Activated CD4-positive, alpha-beta memory T cell treated with anti-CD3 and anti-CD28 coated beads for 36 hours (primary cell): ENCODE measurements at regions of chr13 and their contacts with region 1.

Region 1: GRCh38 chr13:41456768-41457588 is at the start of gene RGCC:
- DNase-seq: peak; percentile 97
- H3K4me3 Mint-ChIP-seq: peak within 1 kb of the TSS; percentile 87
- H3K27ac Mint-ChIP-seq: peak within 1 kb of the TSS; percentile 97
- H3K4me1 Mint-ChIP-seq: peaks cover 41% of the 10 kb centered on the region
- H3K27me3 Mint-ChIP-seq: peaks cover 2% of the 10 kb centered on the region
- total RNA-seq, gene RGCC: 94.8 to 96.8 TPM

Region 2: DNA sequence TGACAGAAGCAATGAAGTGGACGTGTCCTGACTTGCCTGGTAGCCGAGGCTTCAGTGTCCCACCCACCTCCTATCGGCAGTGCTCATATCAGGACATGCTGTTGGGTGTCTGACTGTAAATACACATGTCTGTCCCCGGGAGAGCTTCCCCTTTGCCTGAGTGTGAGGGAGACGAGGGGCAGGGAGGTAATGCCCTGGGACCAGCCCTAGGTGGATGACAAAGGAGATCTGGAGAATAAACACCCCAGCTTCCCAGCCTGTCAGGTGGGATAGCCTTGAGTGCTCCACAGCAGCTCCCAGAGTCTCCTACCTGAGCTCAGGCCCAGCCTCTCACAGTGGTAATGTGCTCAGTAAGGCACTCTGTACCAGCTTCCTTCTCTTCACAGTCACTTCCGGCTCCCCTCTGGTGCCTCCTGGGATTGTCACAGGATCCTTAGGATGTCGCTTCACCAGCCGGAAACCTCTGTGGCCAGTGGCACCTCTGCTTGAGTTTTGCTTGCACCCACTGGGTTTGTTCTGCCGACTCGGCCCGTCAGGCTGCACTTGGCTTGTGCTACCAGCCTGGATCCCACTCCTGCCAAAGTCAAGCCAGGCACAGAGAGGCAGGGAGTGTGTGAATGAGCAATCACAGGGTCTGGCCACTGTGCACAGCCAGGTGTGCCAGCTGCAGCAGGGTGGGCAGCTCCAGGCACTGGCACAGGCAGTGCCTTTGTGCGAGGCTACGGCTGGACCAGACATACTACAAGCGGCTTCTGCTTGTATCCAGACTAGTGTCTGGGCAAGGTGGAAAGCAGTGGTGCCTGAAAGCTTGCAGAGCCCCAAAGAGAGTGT is 54.1 kb before region 1 on chr13:
- CTCF ChIA-PET with region 1: interaction called, 3 read pairs
- POLR2A ChIA-PET with region 1: no interaction called
- intact Hi-C with region 1: loop called (anchors 2 kb)
- DNase-seq: no peak
- H3K4me3 Mint-ChIP-seq: no peak overlapping the region
- H3K27ac Mint-ChIP-seq: no peak overlapping the region
- H3K4me1 Mint-ChIP-seq: no peaks in the 10 kb centered on the region
- H3K27me3 Mint-ChIP-seq: no peaks in the 10 kb centered on the region

Region 3: GRCh38 chr13:41492404-41493260 is 35.7 kb after region 1 on chr13:
- CTCF ChIA-PET with region 1: interaction called, 24 read pairs
- POLR2A ChIA-PET with region 1: interaction called, 40 read pairs
- intact Hi-C with region 1: loop called (anchors 1 kb)
- DNase-seq: peak; percentile 42
- H3K4me3 Mint-ChIP-seq: peak overlapping the region; percentile 45
- H3K27ac Mint-ChIP-seq: peak overlapping the region; percentile 89
- H3K4me1 Mint-ChIP-seq: peaks cover 74% of the 10 kb centered on the region
- H3K27me3 Mint-ChIP-seq: no peaks in the 10 kb centered on the region

Region 4: DNA sequence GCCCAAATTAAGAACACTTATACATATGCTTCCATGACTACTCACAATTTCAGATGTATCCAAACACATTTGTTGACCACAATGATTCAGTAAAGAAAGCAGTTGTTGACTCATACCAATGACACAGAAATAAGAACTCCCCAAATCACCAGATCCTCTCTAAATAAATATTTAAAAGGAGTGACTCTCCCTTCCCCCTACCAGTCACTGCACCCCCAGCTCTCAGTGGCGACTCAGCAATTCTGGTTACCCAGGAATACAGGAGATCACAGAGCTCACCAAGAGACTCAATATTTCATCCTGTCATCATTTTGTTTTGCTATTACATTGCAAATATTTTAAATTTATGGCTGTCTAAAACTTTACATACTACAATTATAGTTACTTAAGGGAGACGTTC is 131.9 kb after region 1 on chr13:
- CTCF ChIA-PET with region 1: interaction called, 11 read pairs
- POLR2A ChIA-PET with region 1: interaction called, 3 read pairs
- intact Hi-C with region 1: loop called (anchors 2 kb)
- DNase-seq: peak; percentile 75
- H3K4me3 Mint-ChIP-seq: no peak overlapping the region
- H3K27ac Mint-ChIP-seq: no peak overlapping the region
- H3K4me1 Mint-ChIP-seq: peaks cover 13% of the 10 kb centered on the region
- H3K27me3 Mint-ChIP-seq: no peaks in the 10 kb centered on the region

Region 5: DNA sequence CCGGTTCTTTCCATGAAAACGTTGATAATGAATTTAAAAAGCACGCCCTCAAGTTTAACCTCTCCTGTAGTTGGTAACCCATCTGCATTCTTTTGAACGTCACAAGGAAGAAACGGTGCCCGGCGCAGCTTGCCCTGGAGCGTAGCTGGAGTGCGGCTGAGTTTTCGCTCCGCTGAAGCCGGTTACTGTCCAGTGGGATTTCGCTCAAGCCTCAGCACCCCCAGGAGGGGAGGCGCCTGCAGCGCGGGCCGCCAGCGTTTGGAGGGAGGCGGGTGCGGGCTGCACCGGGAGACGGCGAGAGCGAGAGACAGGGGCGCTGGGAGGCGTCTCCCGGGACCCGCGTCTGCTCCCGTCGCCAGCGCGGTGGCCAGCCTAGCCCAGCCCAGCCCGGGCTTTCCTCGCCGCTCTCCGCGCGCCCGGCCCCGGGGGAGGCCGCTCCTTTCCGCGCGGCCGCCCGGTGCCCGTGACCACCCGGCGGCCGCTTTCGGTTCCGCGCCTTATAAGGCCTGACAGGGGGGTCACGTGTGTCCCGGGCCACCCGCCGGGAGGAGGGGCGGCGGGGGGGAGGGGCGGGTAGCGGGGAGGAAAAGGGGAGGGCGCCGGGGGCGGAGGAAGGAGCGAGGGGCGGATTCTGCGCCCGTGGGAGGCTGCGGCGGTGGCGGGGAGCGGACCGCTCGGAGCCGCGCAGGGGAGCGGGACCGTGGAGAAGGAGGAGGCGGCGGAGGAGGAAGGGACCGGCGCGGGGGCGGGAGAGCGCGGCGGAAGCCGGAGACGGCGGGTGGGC is 583.2 kb after region 1 on chr13:
- CTCF ChIA-PET with region 1: no interaction called
- POLR2A ChIA-PET with region 1: no interaction called
- intact Hi-C with region 1: loop called (anchors 10 kb)
- DNase-seq: peak; percentile 91
- H3K4me3 Mint-ChIP-seq: peak overlapping the region; percentile 81
- H3K27ac Mint-ChIP-seq: peak overlapping the region; percentile 68
- H3K4me1 Mint-ChIP-seq: peaks cover 18% of the 10 kb centered on the region
- H3K27me3 Mint-ChIP-seq: peaks cover 5% of the 10 kb centered on the region